Activated CD4-positive, alpha-beta T cell treated with anti-CD3 and anti-CD28 coated beads for 36 hours (primary cell): ENCODE measurements at regions of chr3 and their contacts with region 1.

Region 1: GRCh38 chr3:114056130-114057010 is at the starts of genes CCDC191 and QTRT2:
- DNase-seq: peak; percentile 99
- ATAC-seq: peak; percentile 97
- H3K4me3 Mint-ChIP-seq: peak within 1 kb of the TSS; percentile 91
- H3K27ac Mint-ChIP-seq: peak within 1 kb of the TSS; percentile 95
- H3K4me1 Mint-ChIP-seq: peaks cover 43% of the 10 kb centered on the region
- H3K27me3 Mint-ChIP-seq: no peaks in the 10 kb centered on the region
- total RNA-seq, gene CCDC191: 2.2 to 2.4 TPM
- total RNA-seq, gene QTRT2: 31.3 to 47.0 TPM

Region 2: DNA sequence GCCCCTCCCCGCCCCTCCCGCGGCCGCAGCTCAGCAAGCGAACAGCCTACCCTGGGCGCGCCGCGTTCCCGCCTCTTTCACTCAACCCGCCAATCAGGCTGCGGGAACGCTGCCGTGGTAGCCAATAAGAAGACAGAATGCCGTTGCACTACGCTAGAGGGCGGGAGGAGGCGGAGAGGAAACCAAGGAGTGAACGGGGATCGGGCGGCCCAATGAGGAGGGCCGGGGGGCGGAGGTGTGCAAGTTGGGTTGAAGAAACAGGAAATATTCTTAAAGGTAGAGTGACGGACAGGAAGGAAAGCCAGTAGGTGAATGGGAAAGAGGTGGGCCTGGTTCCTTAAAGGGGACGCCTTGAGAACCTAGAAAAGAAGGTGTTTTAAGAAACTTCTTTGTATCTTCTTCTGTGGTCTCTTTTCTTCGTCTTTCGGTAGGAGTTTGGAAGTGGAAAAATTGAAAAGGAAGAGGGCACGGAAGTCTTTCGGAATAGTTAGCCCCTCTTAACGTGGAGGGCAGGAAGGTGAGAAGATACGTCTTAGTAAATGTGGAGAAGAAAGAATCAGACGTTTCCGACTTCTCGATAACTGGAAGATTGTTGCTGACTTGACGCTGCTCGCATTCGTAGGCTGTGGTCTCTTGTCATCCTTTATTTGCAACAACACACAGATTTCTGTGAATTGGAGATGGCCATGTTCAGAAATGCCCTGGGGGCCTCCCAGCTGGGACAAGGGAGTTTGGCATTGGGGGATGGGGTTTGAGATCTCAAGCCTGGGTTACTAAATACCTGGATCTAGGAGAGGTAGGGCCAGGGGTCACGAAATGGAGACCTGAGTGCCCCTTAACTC is 359.5 kb before region 1 on chr3:
- CTCF ChIA-PET with region 1: no interaction called
- POLR2A ChIA-PET with region 1: no interaction called
- intact Hi-C with region 1: loop called (anchors 1 kb)
- DNase-seq: peak; percentile 99
- ATAC-seq: peak; percentile 92
- H3K4me3 Mint-ChIP-seq: no peak overlapping the region
- H3K27ac Mint-ChIP-seq: no peak overlapping the region
- H3K4me1 Mint-ChIP-seq: peaks cover 27% of the 10 kb centered on the region
- H3K27me3 Mint-ChIP-seq: no peaks in the 10 kb centered on the region

Region 3: DNA sequence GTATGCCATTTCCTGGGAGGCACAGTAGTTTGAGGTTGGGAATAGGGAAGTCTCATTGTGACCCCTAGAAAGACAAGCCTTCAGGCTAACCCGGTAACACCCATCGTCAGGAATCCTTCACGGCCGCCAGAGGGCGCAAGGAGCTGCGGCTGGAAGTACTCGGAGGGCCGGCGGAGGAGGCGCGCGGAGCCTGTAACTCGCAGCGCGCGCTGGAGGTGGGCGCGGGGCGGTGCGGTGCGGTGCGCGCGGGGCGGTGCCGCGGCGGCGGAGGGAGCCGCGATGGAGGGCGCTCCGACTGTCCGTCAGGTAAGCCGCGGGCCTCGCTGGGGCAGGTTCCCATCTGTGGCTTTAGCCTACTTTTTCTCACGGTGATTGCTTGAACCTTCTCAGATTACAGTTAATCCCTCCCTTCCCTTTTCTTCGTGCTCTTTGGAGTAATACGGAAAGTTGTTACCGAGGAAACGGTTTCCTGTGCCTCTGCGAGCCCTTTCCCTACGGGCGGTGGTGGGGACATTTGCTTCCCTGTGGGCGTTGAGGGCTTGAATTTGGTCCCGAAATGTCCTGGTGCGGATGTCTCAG is 217.7 kb before region 1 on chr3 and contains the start of gene GRAMD1C:
- CTCF ChIA-PET with region 1: interaction called, 3 read pairs
- POLR2A ChIA-PET with region 1: no interaction called
- intact Hi-C with region 1: loop called (anchors 2 to 5 kb)
- DNase-seq: peak; percentile 92
- ATAC-seq: peak; percentile 98
- H3K4me3 Mint-ChIP-seq: peak within 1 kb of the TSS; percentile 73
- H3K27ac Mint-ChIP-seq: no peak within 1 kb of the TSS
- H3K4me1 Mint-ChIP-seq: peaks cover 8% of the 10 kb centered on the region
- H3K27me3 Mint-ChIP-seq: peaks cover 3% of the 10 kb centered on the region
- total RNA-seq, gene GRAMD1C: 0.87 to 0.97 TPM

Region 4: GRCh38 chr3:113912552-113913236 is 143.7 kb before region 1 on chr3:
- CTCF ChIA-PET with region 1: no interaction called
- POLR2A ChIA-PET with region 1: no interaction called
- intact Hi-C with region 1: loop called in 1 of 2 experiments (anchors 1 kb)
- DNase-seq: peak; percentile 47
- ATAC-seq: peak; percentile 91
- H3K4me3 Mint-ChIP-seq: peak overlapping the region; percentile 15
- H3K27ac Mint-ChIP-seq: no peak overlapping the region
- H3K4me1 Mint-ChIP-seq: peaks cover 5% of the 10 kb centered on the region
- H3K27me3 Mint-ChIP-seq: no peaks in the 10 kb centered on the region

Region 5: DNA sequence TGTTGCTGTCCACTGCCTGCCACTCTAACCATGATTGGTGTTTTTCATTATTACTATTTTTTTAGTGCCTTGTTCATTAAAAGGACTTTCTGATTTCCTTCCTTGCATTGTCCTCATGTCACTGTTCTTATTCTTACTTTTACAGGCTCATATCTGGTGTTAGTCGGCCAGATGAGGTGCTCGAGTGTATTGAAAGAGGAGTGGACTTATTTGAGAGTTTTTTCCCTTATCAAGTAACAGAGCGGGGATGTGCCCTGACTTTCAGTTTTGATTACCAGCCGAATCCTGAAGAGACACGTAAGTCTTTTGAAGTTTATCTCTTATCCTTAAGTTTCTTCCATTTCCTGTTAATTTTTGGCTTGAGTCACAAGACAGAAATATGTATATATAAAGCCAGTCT is 23.4 kb after region 1 on chr3:
- CTCF ChIA-PET with region 1: interaction called, 5 read pairs
- POLR2A ChIA-PET with region 1: interaction called, 10 read pairs
- intact Hi-C with region 1: no loop called
- DNase-seq: no peak
- ATAC-seq: no peak
- H3K4me3 Mint-ChIP-seq: no peak overlapping the region
- H3K27ac Mint-ChIP-seq: no peak overlapping the region
- H3K4me1 Mint-ChIP-seq: no peaks in the 10 kb centered on the region
- H3K27me3 Mint-ChIP-seq: no peaks in the 10 kb centered on the region

Region 6: GRCh38 chr3:114112696-114113095 is 56.3 kb after region 1 on chr3:
- CTCF ChIA-PET with region 1: no interaction called
- POLR2A ChIA-PET with region 1: no interaction called
- intact Hi-C with region 1: no loop called
- DNase-seq: no peak
- ATAC-seq: no peak
- H3K4me3 Mint-ChIP-seq: no peak overlapping the region
- H3K27ac Mint-ChIP-seq: no peak overlapping the region
- H3K4me1 Mint-ChIP-seq: no peaks in the 10 kb centered on the region
- H3K27me3 Mint-ChIP-seq: peaks cover 5% of the 10 kb centered on the region

Region 7: GRCh38 chr3:114649331-114649730 is 593.0 kb after region 1 on chr3:
- CTCF ChIA-PET with region 1: no interaction called
- POLR2A ChIA-PET with region 1: no interaction called
- intact Hi-C with region 1: no loop called
- DNase-seq: no peak
- ATAC-seq: no peak
- H3K4me3 Mint-ChIP-seq: no peak overlapping the region
- H3K27ac Mint-ChIP-seq: no peak overlapping the region
- H3K4me1 Mint-ChIP-seq: peaks cover 10% of the 10 kb centered on the region
- H3K27me3 Mint-ChIP-seq: no peaks in the 10 kb centered on the region

Region 8: GRCh38 chr3:114827495-114827894 is 771.1 kb after region 1 on chr3:
- CTCF ChIA-PET with region 1: no interaction called
- POLR2A ChIA-PET with region 1: no interaction called
- intact Hi-C with region 1: no loop called
- DNase-seq: peak; percentile 12
- ATAC-seq: peak; percentile 63
- H3K4me3 Mint-ChIP-seq: no peak overlapping the region
- H3K27ac Mint-ChIP-seq: no peak overlapping the region
- H3K4me1 Mint-ChIP-seq: peaks cover 5% of the 10 kb centered on the region
- H3K27me3 Mint-ChIP-seq: no peaks in the 10 kb centered on the region

Region 9: GRCh38 chr3:114848082-114848481 is 791.7 kb after region 1 on chr3:
- CTCF ChIA-PET with region 1: no interaction called
- POLR2A ChIA-PET with region 1: no interaction called
- intact Hi-C with region 1: no loop called
- DNase-seq: no peak
- ATAC-seq: no peak
- H3K4me3 Mint-ChIP-seq: no peak overlapping the region
- H3K27ac Mint-ChIP-seq: no peak overlapping the region
- H3K4me1 Mint-ChIP-seq: no peaks in the 10 kb centered on the region
- H3K27me3 Mint-ChIP-seq: no peaks in the 10 kb centered on the region